Left ventricle myocardium inferior (tissue), 1 donor: ENCODE measurements at regions of chr10 and their contacts with region 1.

Region 1: GRCh38 chr10:94362360-94363250 is at the start of gene NOC3L:
- DNase-seq: peak; percentile 96
- H3K4me3 ChIP-seq: peak within 1 kb of the TSS; percentile 83
- H3K27ac ChIP-seq: peak within 1 kb of the TSS; percentile 79
- H3K4me1 ChIP-seq: peaks cover 30% of the 10 kb centered on the region
- H3K27me3 ChIP-seq: no peaks in the 10 kb centered on the region
- CTCF ChIP-seq: peak; percentile 96
- total RNA-seq, gene NOC3L: 10.0 TPM

Region 2: DNA sequence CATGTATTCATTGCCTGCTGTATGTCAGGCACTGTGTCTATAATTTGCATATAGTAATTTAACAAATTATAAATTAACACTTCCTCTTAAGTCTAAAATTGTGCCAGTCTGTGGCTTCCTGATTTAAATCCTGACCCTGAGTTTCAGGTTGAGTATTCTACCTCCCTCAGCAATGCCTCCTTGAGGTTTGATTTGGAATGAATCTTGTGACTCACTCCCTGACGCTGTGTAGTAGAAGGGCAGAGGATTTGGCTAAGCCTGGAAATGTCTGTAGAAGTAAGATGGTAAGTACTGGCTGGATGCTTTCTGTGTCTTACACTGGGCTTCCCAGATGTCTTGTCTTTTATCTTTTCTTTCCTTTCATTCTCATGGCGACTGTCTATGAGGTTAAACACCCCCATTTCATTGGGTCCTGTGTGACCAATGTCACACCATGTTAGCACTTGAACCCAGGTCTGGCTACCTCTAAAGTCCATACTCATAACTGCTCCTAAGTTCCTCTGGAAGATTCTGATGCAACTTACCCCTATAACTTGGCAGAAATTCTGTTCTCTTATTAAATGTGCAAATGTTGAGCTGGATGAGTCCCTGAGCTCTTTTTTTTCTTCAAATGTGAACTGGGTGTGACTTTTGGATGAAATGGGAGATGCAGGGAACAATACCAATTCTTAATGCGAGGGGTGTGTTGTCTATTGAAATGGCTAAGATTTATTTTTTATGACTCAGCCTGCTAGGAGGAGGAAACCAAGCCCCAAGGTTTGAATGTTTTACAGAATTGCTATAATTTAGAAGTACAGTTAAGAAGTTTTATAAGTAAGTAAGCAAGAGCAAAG is 320.4 kb before region 1 on chr10:
- intact Hi-C with region 1: no loop called
- DNase-seq: no peak
- H3K4me3 ChIP-seq: no peak overlapping the region
- H3K27ac ChIP-seq: no peak overlapping the region
- H3K4me1 ChIP-seq: no peaks in the 10 kb centered on the region
- H3K27me3 ChIP-seq: no peaks in the 10 kb centered on the region
- CTCF ChIP-seq: no peak

Region 3: GRCh38 chr10:94443047-94443446 is 80.4 kb after region 1 on chr10:
- intact Hi-C with region 1: loop called (anchors 10 kb)
- DNase-seq: no peak
- H3K4me3 ChIP-seq: no peak overlapping the region
- H3K27ac ChIP-seq: no peak overlapping the region
- H3K4me1 ChIP-seq: peaks cover 9% of the 10 kb centered on the region
- H3K27me3 ChIP-seq: no peaks in the 10 kb centered on the region
- CTCF ChIP-seq: no peak